GM10248 (cell line): ENCODE measurements at regions of chr6 and their contacts with region 1.

Region 1: GRCh38 chr6:36594029-36594815 is at the start of gene SRSF3:
- DNase-seq: peak; percentile 95
- CTCF ChIP-seq: peak; percentile 43

Region 2: DNA sequence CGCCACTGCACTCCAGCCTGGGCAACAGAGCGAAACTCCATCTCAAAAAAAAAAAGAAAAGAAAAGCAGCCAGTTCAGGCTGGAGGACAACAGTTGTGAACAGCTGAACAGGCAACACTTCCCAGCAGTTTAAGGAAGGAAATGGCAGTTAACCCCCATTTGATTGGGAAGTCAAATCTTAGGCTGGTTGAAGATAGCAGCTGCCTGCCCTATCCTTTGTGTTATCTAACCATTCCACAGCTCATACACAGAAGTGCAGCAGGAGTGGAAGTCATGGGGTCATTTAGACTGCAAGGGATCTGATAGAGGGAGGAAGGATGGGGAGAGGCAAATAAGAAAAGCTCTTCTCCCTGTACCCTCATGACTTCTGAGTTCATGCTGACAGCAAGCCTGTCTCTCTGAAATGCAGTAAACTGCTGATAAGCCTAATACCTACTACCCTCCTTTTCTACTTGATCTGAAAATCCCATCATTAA is 116.1 kb before region 1 on chr6:
- CTCF ChIA-PET with region 1: no interaction called
- POLR2A ChIA-PET with region 1: interaction called, 14 read pairs
- DNase-seq: no peak
- CTCF ChIP-seq: no peak

Region 3: DNA sequence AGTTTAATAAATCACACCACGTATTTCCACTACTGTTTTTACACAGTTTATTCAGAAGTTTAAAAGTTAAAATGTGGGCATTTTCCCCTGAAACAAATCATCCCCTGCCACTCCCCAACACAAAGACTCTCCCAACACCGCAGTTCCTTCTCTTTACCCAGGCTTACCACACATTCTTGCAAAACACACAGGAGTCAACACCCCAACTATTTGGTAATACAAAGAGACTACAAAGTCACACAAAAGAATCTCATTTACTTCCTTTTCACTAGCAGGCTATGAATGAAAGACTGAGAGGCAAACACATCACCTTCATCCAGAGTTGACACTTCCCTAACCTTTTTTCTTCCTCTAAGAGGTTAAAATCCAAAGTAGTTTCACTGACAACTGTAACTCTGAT is 100.4 kb before region 1 on chr6:
- CTCF ChIA-PET with region 1: no interaction called
- POLR2A ChIA-PET with region 1: no interaction called
- DNase-seq: no peak
- CTCF ChIP-seq: no peak

Region 4: DNA sequence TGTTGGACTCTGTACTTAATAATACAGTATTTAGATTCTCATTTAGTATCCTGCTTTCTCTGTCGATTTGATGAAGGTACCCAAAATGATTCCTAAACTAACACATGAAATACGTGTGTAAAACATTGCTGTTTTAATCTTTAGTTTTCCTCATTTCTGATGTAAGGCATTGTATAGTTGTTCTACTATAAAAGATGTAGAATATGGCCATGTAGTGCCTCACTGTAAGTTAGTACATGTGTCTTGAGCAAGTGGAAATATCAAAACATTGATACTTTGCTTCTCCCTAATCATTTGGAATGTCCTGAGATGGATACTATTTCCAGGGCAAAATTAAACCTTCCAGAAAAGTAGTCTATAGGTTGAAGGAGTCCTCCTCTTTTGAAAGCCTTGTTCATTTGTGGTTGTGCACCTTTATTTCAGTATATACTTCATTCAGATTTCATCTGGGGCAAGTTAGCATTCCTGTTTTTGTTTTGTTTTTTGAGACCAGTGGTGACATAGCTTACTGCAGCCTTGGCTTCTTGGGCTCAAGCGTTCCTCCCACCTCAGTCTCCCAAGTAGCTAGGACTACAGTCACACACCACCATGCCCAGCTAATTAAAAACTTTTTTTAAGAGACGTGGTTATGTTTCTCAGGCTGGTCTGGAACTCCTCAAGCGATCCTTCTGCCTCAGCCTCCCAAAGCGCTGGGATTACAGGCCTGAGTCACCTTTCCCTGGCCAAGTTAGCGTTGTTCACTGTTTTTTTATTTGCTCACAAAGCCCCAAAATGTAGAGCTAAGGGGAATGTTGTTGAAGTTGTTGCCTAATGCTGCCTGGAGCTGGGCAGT is 11.6 kb after region 1 on chr6:
- CTCF ChIA-PET with region 1: interaction called, 10 read pairs
- POLR2A ChIA-PET with region 1: interaction called, 108 read pairs
- DNase-seq: no peak
- CTCF ChIP-seq: no peak

Region 5: GRCh38 chr6:36623547-36624459 is 29.6 kb after region 1 on chr6:
- CTCF ChIA-PET with region 1: interaction called, 3 read pairs
- POLR2A ChIA-PET with region 1: interaction called, 12 read pairs
- DNase-seq: peak; percentile 84
- CTCF ChIP-seq: peak; percentile 91